MCF 10A (cell line): ENCODE measurements at regions of chr10 and their contacts with region 1.

Region 1: GRCh38 chr10:128011175-128011979 is 104.5 kb downstream of the PTPRE start:
- DNase-seq: peak; percentile 70
- H3K4me3 Mint-ChIP-seq: peak overlapping the region; percentile 6
- H3K27ac Mint-ChIP-seq: no peak overlapping the region
- H3K4me1 Mint-ChIP-seq: peaks cover 9% of the 10 kb centered on the region
- H3K27me3 Mint-ChIP-seq: no peaks in the 10 kb centered on the region
- CTCF ChIP-seq: peak; percentile 98

Region 2: GRCh38 chr10:127899766-127900387 is 111.5 kb before region 1 on chr10:
- CTCF ChIA-PET with region 1: interaction called, 260 read pairs
- POLR2A ChIA-PET with region 1: interaction called, 3 read pairs
- intact Hi-C with region 1: no loop called
- DNase-seq: no peak
- H3K4me3 Mint-ChIP-seq: no peak overlapping the region
- H3K27ac Mint-ChIP-seq: no peak overlapping the region
- H3K4me1 Mint-ChIP-seq: peaks cover 5% of the 10 kb centered on the region
- H3K27me3 Mint-ChIP-seq: no peaks in the 10 kb centered on the region
- CTCF ChIP-seq: no peak

Region 3: GRCh38 chr10:127913368-127913759 is 98.0 kb before region 1 on chr10:
- CTCF ChIA-PET with region 1: interaction called, 260 read pairs
- POLR2A ChIA-PET with region 1: no interaction called
- intact Hi-C with region 1: no loop called
- DNase-seq: no peak
- H3K4me3 Mint-ChIP-seq: no peak overlapping the region
- H3K27ac Mint-ChIP-seq: no peak overlapping the region
- H3K4me1 Mint-ChIP-seq: peaks cover 7% of the 10 kb centered on the region
- H3K27me3 Mint-ChIP-seq: no peaks in the 10 kb centered on the region
- CTCF ChIP-seq: no peak

Region 4: GRCh38 chr10:127990846-127991542 is 20.4 kb before region 1 on chr10:
- CTCF ChIA-PET with region 1: interaction called, 27 read pairs
- POLR2A ChIA-PET with region 1: no interaction called
- intact Hi-C with region 1: no loop called
- DNase-seq: peak; percentile 79
- H3K4me3 Mint-ChIP-seq: peak overlapping the region; percentile 52
- H3K27ac Mint-ChIP-seq: peak overlapping the region; percentile 85
- H3K4me1 Mint-ChIP-seq: peaks cover 22% of the 10 kb centered on the region
- H3K27me3 Mint-ChIP-seq: no peaks in the 10 kb centered on the region
- CTCF ChIP-seq: no peak

Region 5: DNA sequence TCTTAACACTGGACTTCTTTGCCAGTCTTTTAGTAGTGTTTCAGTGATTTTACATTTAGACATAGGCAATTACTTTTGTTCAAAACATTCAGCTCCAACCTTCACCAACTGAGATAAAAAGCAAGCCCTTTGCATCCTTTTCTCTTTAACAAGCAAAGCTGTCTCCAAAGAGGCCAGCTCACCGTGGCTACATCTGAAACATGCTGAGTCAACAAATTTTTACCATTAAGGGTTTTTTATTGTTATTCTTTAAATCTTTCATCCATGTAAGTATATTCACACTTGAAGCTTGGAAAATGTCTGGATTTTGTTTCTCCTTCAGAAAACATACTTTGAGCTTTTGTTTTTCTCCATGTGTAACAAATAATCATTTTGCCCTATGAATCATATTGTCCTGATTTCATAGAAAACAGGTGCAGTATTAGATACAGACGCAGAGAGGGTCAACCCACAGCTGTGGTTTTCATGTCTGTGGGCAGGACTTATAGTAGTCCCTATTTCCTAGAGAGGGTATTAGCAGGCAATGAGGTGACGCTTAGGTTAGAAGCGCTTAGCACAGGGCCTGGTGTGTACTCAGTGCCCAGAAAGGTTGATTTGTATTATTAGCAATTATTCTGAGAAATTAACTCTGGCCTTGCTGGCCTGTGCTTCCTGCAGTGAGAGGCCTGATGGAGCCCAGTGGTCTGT is 15.4 kb after region 1 on chr10:
- CTCF ChIA-PET with region 1: interaction called, 18 read pairs
- POLR2A ChIA-PET with region 1: no interaction called
- intact Hi-C with region 1: no loop called
- DNase-seq: no peak
- H3K4me3 Mint-ChIP-seq: no peak overlapping the region
- H3K27ac Mint-ChIP-seq: peak overlapping the region; percentile 39
- H3K4me1 Mint-ChIP-seq: no peaks in the 10 kb centered on the region
- H3K27me3 Mint-ChIP-seq: no peaks in the 10 kb centered on the region
- CTCF ChIP-seq: no peak

Region 6: GRCh38 chr10:128069351-128070051 is 58.1 kb after region 1 on chr10:
- CTCF ChIA-PET with region 1: interaction called, 14 read pairs
- POLR2A ChIA-PET with region 1: interaction called, 3 read pairs
- intact Hi-C with region 1: loop called (anchors 1 kb)
- DNase-seq: peak; percentile 79
- H3K4me3 Mint-ChIP-seq: no peak overlapping the region
- H3K27ac Mint-ChIP-seq: peak overlapping the region; percentile 70
- H3K4me1 Mint-ChIP-seq: peaks cover 25% of the 10 kb centered on the region
- H3K27me3 Mint-ChIP-seq: no peaks in the 10 kb centered on the region
- CTCF ChIP-seq: peak; percentile 85